Prostate gland (tissue), 2 donors: ENCODE measurements at regions of chr5 and their contacts with region 1.

Region 1: GRCh38 chr5:13994621-13995253 is 50.2 kb upstream of the DNAH5 start:
- DNase-seq: no peak
- H3K4me3 ChIP-seq: no peak overlapping the region
- H3K27ac ChIP-seq: no peak overlapping the region
- H3K4me1 ChIP-seq: no peaks in the 10 kb centered on the region
- H3K27me3 ChIP-seq: no peaks in the 10 kb centered on the region
- CTCF ChIP-seq: no peak
- POLR2A ChIP-seq: no peak

Region 2: GRCh38 chr5:14185326-14186058 is 190.8 kb after region 1 on chr5:
- intact Hi-C with region 1: no loop called
- DNase-seq: no peak
- H3K4me3 ChIP-seq: no peak overlapping the region
- H3K27ac ChIP-seq: peak overlapping the region; percentile 72
- H3K4me1 ChIP-seq: peaks cover 3% of the 10 kb centered on the region
- H3K27me3 ChIP-seq: no peaks in the 10 kb centered on the region
- CTCF ChIP-seq: no peak
- POLR2A ChIP-seq: no peak

Region 3: DNA sequence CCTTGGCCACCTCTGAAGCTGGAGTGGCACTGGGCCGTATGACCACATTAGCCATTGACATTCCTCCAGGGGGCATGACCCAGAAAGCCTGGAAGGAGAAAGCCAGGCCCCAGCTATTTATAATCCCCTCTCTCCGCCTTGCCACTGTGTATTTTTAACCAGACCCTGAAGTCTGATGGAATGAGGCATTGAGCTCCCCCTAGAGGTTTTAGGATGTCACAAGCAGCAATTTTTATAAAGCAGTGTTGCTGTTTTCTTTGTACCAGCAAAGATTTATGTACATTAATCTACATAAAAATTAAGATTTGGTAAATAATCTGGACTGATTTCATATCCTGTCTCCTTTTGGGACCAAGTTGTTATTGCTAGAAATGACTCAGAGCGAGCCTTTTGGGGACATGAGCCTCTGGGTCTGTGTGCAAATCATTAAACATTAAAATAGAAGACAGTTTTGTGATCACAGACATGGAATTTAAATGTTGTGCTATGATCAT is 275.5 kb after region 1 on chr5:
- intact Hi-C with region 1: loop called (anchors 5 kb)
- DNase-seq: no peak
- H3K4me3 ChIP-seq: no peak overlapping the region
- H3K27ac ChIP-seq: peak overlapping the region; percentile 42 to 43
- H3K4me1 ChIP-seq: peaks cover 19% of the 10 kb centered on the region
- H3K27me3 ChIP-seq: no peaks in the 10 kb centered on the region
- CTCF ChIP-seq: peak; percentile 52 to 76 (median 72)
- POLR2A ChIP-seq: no peak

Region 4: GRCh38 chr5:14351845-14352712 is 357.3 kb after region 1 on chr5:
- intact Hi-C with region 1: loop called (anchors 5 kb)
- DNase-seq: peak; percentile 39
- H3K4me3 ChIP-seq: no peak overlapping the region
- H3K27ac ChIP-seq: no peak overlapping the region
- H3K4me1 ChIP-seq: no peaks in the 10 kb centered on the region
- H3K27me3 ChIP-seq: no peaks in the 10 kb centered on the region
- CTCF ChIP-seq: peak; percentile 77 to 86 (median 84)
- POLR2A ChIP-seq: no peak